ENCODE measurements at regions of chr9 and their contacts with region 1.

Region 1: GRCh38 chr9:5671711-5672353 is 42.9 kb downstream of the RIC1 start:
- DNase-seq: peak; percentile 14
- H3K4me3 Mint-ChIP-seq: no peak overlapping the region
- H3K27ac Mint-ChIP-seq: no peak overlapping the region
- H3K4me1 Mint-ChIP-seq: peaks cover 35% of the 10 kb centered on the region
- H3K27me3 Mint-ChIP-seq: no peaks in the 10 kb centered on the region

Region 2: GRCh38 chr9:5708414-5708813 is 36.6 kb after region 1 on chr9:
- CTCF ChIA-PET with region 1: no interaction called
- intact Hi-C with region 1: loop called (anchors 5 kb)
- DNase-seq: no peak
- H3K4me3 Mint-ChIP-seq: no peak overlapping the region
- H3K27ac Mint-ChIP-seq: no peak overlapping the region
- H3K4me1 Mint-ChIP-seq: peaks cover 2% of the 10 kb centered on the region
- H3K27me3 Mint-ChIP-seq: no peaks in the 10 kb centered on the region

Measured in activated naive CD4-positive, alpha-beta T cell treated with anti-CD3 and anti-CD28 coated beads for 36 hours (primary cell).